Activated CD4-positive, alpha-beta T cell treated with anti-CD3 and anti-CD28 coated beads for 36 hours (primary cell): ENCODE measurements at regions of chr12 and their contacts with region 1.

Region 1: DNA sequence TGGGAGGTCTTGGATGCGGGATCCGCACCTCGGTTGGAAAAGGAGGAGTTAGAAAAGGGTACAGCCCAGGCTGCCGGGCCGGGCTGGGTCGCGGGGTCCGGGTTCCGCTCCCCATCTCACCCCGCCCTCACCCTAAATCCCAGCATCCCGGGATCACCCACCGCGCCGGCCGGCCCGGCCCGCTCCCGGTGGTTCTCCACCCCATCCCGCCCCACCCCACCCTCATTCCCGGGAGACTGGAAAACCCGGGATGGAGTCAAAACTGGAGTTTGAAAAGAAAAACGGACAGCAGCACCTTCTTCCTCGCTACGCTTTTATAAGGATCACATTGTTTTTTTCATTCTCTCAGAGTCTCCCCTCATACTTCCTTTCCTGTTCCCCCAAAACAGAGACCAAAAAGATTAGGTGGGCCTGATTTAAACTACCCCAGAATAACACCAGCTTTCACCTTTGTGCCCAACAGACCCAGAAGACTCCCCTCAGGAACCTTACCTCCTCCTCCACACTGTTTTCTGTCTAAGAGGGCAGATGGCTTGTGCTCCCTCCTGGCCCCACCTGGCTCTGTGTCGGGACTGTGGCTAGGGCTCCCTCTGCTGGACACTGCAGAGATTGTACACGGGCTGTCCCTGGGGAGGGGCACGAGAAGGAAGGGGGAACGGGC is 2.8 kb downstream of the GLI1 start:
- DNase-seq: peak; percentile 94
- ATAC-seq: peak; percentile 82
- H3K4me3 Mint-ChIP-seq: peak overlapping the region; percentile 77
- H3K27ac Mint-ChIP-seq: peak overlapping the region; percentile 80
- H3K4me1 Mint-ChIP-seq: peaks cover 54% of the 10 kb centered on the region
- H3K27me3 Mint-ChIP-seq: peaks cover 4% of the 10 kb centered on the region

Region 2: DNA sequence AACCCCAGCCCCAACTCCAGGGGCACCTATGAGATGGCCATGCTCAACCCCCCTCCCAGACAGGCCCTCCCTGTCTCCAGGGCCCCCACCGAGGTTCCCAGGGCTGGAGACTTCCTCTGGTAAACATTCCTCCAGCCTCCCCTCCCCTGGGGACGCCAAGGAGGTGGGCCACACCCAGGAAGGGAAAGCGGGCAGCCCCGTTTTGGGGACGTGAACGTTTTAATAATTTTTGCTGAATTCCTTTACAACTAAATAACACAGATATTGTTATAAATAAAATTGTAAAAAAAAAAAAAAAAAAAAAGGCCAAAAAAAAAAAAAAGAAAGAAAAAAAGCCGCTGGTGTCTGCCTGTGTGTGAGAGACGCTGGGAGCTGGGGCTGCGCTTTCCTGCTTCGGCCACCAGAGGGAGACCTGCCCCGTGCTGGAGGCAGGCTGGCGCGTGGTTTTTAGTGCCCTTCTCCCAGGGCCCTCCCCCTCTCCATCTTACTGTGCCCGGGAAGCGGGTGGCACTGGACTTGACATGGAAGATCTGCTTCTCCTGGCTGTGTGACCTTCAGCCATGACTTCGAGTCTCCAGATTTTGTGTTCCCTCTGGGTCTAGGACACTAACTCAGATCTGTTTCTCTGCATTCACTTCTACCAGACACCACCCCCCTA is 249.2 kb before region 1 on chr12:
- CTCF ChIA-PET with region 1: interaction called, 6 read pairs
- POLR2A ChIA-PET with region 1: interaction called, 3 read pairs
- intact Hi-C with region 1: loop called in 1 of 2 experiments (anchors 2 kb)
- DNase-seq: peak; percentile 92
- ATAC-seq: peak; percentile 69
- H3K4me3 Mint-ChIP-seq: no peak overlapping the region
- H3K27ac Mint-ChIP-seq: no peak overlapping the region
- H3K4me1 Mint-ChIP-seq: peaks cover 25% of the 10 kb centered on the region
- H3K27me3 Mint-ChIP-seq: peaks cover 38% of the 10 kb centered on the region

Region 3: GRCh38 chr12:57261428-57261865 is 200.9 kb before region 1 on chr12:
- CTCF ChIA-PET with region 1: interaction called, 10 read pairs
- POLR2A ChIA-PET with region 1: no interaction called
- intact Hi-C with region 1: loop called in 1 of 2 experiments (anchors 1 kb)
- DNase-seq: no peak
- ATAC-seq: no peak
- H3K4me3 Mint-ChIP-seq: no peak overlapping the region
- H3K27ac Mint-ChIP-seq: no peak overlapping the region
- H3K4me1 Mint-ChIP-seq: peaks cover 3% of the 10 kb centered on the region
- H3K27me3 Mint-ChIP-seq: no peaks in the 10 kb centered on the region

Region 4: GRCh38 chr12:57309420-57309819 is 153.0 kb before region 1 on chr12:
- CTCF ChIA-PET with region 1: interaction called, 11 read pairs
- POLR2A ChIA-PET with region 1: no interaction called
- intact Hi-C with region 1: no loop called
- DNase-seq: no peak
- ATAC-seq: no peak
- H3K4me3 Mint-ChIP-seq: no peak overlapping the region
- H3K27ac Mint-ChIP-seq: no peak overlapping the region
- H3K4me1 Mint-ChIP-seq: no peaks in the 10 kb centered on the region
- H3K27me3 Mint-ChIP-seq: no peaks in the 10 kb centered on the region

Region 5: DNA sequence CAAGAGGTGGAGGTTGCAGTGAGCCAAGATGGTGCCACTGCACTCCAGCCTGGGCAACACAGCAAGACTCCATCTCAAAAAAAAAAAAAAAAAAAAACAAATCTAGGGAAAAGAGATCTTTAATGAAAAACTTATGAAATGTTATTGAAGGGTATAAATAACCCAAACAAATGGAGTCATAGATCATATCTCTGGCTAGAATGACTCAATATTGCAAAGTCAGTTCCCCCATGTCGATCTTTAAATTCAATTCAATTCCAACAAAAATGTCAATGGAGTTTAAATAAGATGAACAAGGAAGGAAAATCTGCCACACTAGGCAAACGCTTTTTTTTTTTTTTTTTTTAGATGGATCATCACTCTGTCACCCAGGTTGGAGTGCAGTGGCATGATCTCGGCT is 110.2 kb before region 1 on chr12:
- CTCF ChIA-PET with region 1: no interaction called
- POLR2A ChIA-PET with region 1: no interaction called
- intact Hi-C with region 1: no loop called
- DNase-seq: no peak
- ATAC-seq: no peak
- H3K4me3 Mint-ChIP-seq: no peak overlapping the region
- H3K27ac Mint-ChIP-seq: no peak overlapping the region
- H3K4me1 Mint-ChIP-seq: no peaks in the 10 kb centered on the region
- H3K27me3 Mint-ChIP-seq: no peaks in the 10 kb centered on the region

Region 6: DNA sequence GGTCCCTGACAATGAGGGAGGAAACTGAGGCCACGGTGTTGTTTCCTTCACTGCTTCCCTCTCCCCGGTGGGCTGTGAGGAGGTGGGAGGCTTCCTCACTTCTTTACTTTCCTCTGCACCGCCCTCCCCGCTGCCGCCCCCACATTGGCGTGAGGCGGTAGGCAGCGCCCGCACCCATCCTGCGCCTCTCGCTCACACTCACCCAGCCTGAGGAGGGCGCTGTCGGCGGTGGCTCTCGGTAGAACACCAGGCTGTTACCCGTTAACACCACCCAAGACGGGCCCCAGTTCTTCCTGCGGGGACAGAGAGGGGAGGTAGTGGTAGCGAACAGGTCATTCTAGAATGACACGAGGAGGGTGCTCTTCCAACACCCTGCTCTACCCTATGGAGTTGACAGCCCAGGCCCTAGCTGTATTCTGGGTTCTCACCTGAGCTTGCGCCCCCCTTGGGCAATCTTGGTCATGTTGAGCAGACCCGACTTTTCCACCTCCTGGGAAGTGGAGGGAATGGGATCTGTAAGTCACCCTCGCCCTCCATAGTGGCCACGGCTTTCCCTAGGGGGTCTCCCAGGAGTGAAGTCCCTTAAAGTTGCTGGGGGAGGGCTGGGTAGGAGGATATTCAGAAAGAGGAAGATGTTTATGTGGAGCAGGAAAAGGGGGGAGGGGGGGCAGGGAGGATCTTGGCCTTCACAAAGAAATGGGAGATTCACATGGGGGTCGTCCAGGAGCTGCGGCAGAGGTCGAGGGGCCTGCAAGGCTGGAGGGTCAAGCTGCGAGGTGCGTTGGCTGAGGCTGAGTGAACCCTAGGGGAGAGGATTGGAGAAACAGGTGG is 14.0 kb after region 1 on chr12:
- CTCF ChIA-PET with region 1: interaction called, 58 read pairs
- POLR2A ChIA-PET with region 1: interaction called, 4 read pairs
- intact Hi-C with region 1: loop called (anchors 1 to 2 kb)
- DNase-seq: peak; percentile 96
- ATAC-seq: peak; percentile 71
- H3K4me3 Mint-ChIP-seq: peak overlapping the region; percentile 86
- H3K27ac Mint-ChIP-seq: peak overlapping the region; percentile 99
- H3K4me1 Mint-ChIP-seq: peaks cover 62% of the 10 kb centered on the region
- H3K27me3 Mint-ChIP-seq: no peaks in the 10 kb centered on the region

Region 7: GRCh38 chr12:57546438-57547383 is 84.3 kb after region 1 on chr12 and contains the start of gene DCTN2:
- CTCF ChIA-PET with region 1: interaction called, 6 read pairs
- POLR2A ChIA-PET with region 1: no interaction called
- intact Hi-C with region 1: loop called in 1 of 2 experiments (anchors 1 kb)
- DNase-seq: peak; percentile 97
- ATAC-seq: peak; percentile 98
- H3K4me3 Mint-ChIP-seq: peak within 1 kb of the TSS; percentile 99
- H3K27ac Mint-ChIP-seq: peak within 1 kb of the TSS; percentile 99
- H3K4me1 Mint-ChIP-seq: peaks cover 45% of the 10 kb centered on the region
- H3K27me3 Mint-ChIP-seq: peaks cover 13% of the 10 kb centered on the region
- total RNA-seq, gene DCTN2: 69.7 to 81.2 TPM

Region 8: GRCh38 chr12:57744777-57745484 is 282.6 kb after region 1 on chr12 and contains the start of gene TSPAN31:
- CTCF ChIA-PET with region 1: interaction called, 5 read pairs
- POLR2A ChIA-PET with region 1: interaction called, 3 read pairs
- intact Hi-C with region 1: loop called in 1 of 2 experiments (anchors 2 kb)
- DNase-seq: peak; percentile 98
- ATAC-seq: peak; percentile 82
- H3K4me3 Mint-ChIP-seq: peak within 1 kb of the TSS; percentile 94
- H3K27ac Mint-ChIP-seq: peak within 1 kb of the TSS; percentile 98
- H3K4me1 Mint-ChIP-seq: peaks cover 47% of the 10 kb centered on the region
- H3K27me3 Mint-ChIP-seq: no peaks in the 10 kb centered on the region
- total RNA-seq, gene TSPAN31: 13.6 to 15.9 TPM